Ascending aorta (tissue), 2 donors: ENCODE measurements at regions of chr4 and their contacts with region 1.

Region 1: DNA sequence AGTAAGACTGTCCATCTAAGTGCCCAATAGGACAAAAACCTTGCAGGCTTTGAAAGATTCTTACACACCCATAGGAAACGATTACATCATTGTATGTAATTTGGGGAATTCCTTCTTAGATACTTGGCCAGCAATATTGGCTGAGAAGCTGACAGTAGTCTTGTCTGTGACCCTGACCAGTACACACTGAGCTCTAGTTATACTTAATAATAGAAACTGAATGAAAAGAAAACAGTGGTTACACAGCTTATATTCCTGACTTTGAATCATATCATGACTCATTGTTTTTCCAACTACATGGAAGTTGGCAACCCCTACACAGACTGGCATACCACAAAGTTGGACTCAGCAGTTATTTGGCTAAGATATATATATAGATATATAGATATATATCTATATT is 7.1 kb upstream of the TLR2 start:
- DNase-seq: no peak
- H3K4me3 ChIP-seq: no peak overlapping the region
- H3K27ac ChIP-seq: peak overlapping the region; percentile 51 to 68
- H3K4me1 ChIP-seq: peaks cover 0 to 15% of the 10 kb centered on the region in 2 donors
- H3K27me3 ChIP-seq: no peaks in the 10 kb centered on the region
- CTCF ChIP-seq: no peak

Region 2: DNA sequence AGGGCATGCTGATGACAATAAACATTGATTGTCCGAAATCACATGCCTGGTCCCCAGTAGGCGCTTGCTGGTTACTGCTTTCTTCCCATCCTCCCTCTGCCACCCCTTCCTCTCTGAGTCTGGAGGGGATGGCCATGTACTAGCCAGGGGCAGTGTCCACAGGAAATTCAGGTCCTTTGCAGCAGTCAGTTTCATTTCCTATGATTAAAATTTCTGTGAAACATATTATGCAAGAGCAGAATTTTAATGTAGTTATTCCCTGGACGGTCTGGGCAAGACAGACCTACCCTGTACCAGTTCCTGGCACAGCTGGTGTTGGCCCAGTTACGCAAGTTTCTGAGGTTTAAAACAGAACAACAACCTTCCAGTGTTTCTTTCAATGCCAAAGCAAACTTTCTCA is 21.1 kb before region 1 on chr4:
- intact Hi-C with region 1: loop called (anchors 1 kb)
- DNase-seq: peak; percentile 52 to 91
- H3K4me3 ChIP-seq: no peak overlapping the region
- H3K27ac ChIP-seq: peak overlapping the region; percentile 53 to 79
- H3K4me1 ChIP-seq: peaks cover 8 to 30% of the 10 kb centered on the region in 2 donors
- H3K27me3 ChIP-seq: no peaks in the 10 kb centered on the region
- CTCF ChIP-seq: no peak